Heart left ventricle (tissue), 16 donors: ENCODE measurements at regions of chr9 and their contacts with region 1.

Region 1: GRCh38 chr9:15499139-15499538 is 11.6 kb downstream of the PSIP1 start:
- DNase-seq: no peak
- ATAC-seq: no peak
- H3K4me3 ChIP-seq: no peak overlapping the region
- H3K27ac ChIP-seq: no peak overlapping the region
- H3K4me1 ChIP-seq: peaks cover 0 to 12% (median 0%) of the 10 kb centered on the region in 12 donors
- H3K27me3 ChIP-seq: no peaks in the 10 kb centered on the region
- CTCF ChIP-seq: no peak
- POLR2A ChIP-seq: no peak

Region 2: GRCh38 chr9:15430920-15431844 is 68.0 kb before region 1 on chr9:
- intact Hi-C with region 1: loop called in 2 of 10 experiments (anchors 5 to 10 kb)
- DNase-seq: no peak
- ATAC-seq: peak in 3 of 4 donors; percentile 26 to 70 (median 41)
- H3K4me3 ChIP-seq: no peak overlapping the region
- H3K27ac ChIP-seq: no peak overlapping the region
- H3K4me1 ChIP-seq: peaks cover 0 to 43% (median 17%) of the 10 kb centered on the region in 12 donors
- H3K27me3 ChIP-seq: no peaks in the 10 kb centered on the region
- CTCF ChIP-seq: no peak
- POLR2A ChIP-seq: no peak

Region 3: GRCh38 chr9:15813076-15813475 is 313.9 kb after region 1 on chr9:
- intact Hi-C with region 1: no loop called
- DNase-seq: no peak
- ATAC-seq: no peak
- H3K4me3 ChIP-seq: no peak overlapping the region
- H3K27ac ChIP-seq: no peak overlapping the region
- H3K4me1 ChIP-seq: no peaks in the 10 kb centered on the region
- H3K27me3 ChIP-seq: no peaks in the 10 kb centered on the region
- CTCF ChIP-seq: no peak
- POLR2A ChIP-seq: no peak

Region 4: DNA sequence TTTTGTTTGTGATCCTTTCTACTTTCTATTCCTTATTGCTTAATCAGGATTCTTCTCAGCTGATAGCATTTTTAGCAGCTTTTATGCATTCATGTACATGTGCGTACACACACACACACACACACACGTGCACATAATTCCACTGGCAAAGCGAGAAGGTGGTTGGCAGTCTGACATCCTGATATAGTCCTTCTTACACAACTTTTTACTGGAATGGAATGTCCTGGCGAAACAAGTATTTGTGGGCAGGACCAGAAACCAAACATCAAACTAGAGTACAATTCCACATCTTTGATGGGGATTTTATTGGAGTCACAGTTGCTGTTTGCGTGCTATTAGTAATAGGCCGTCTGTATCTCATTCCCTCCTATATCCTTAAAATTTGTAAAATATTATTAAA is 410.2 kb after region 1 on chr9:
- intact Hi-C with region 1: no loop called
- DNase-seq: no peak
- ATAC-seq: peak in 1 of 4 donors; percentile 33
- H3K4me3 ChIP-seq: no peak overlapping the region
- H3K27ac ChIP-seq: no peak overlapping the region
- H3K4me1 ChIP-seq: no peaks in the 10 kb centered on the region
- H3K27me3 ChIP-seq: no peaks in the 10 kb centered on the region
- CTCF ChIP-seq: no peak
- POLR2A ChIP-seq: no peak